Activated CD4-positive, alpha-beta T cell treated with anti-CD3 and anti-CD28 coated beads for 36 hours (primary cell): ENCODE measurements at regions of chr17 and their contacts with region 1.

Region 1: GRCh38 chr17:2814481-2815341 is 18.5 kb downstream of the RAP1GAP2 start:
- DNase-seq: peak; percentile 92
- ATAC-seq: peak; percentile 80
- H3K4me3 Mint-ChIP-seq: peak overlapping the region; percentile 38
- H3K27ac Mint-ChIP-seq: no peak overlapping the region
- H3K4me1 Mint-ChIP-seq: peaks cover 20% of the 10 kb centered on the region
- H3K27me3 Mint-ChIP-seq: peaks cover 10% of the 10 kb centered on the region

Region 2: GRCh38 chr17:2796164-2797125 is 18.3 kb before region 1 on chr17 and contains the start of gene RAP1GAP2:
- CTCF ChIA-PET with region 1: interaction called, 4 read pairs
- POLR2A ChIA-PET with region 1: interaction called, 6 read pairs
- intact Hi-C with region 1: loop called in 1 of 2 experiments (anchors 1 kb)
- DNase-seq: peak; percentile 72
- ATAC-seq: peak; percentile 79
- H3K4me3 Mint-ChIP-seq: peak within 1 kb of the TSS; percentile 50
- H3K27ac Mint-ChIP-seq: peak within 1 kb of the TSS; percentile 12
- H3K4me1 Mint-ChIP-seq: peaks cover 70% of the 10 kb centered on the region
- H3K27me3 Mint-ChIP-seq: peaks cover 16% of the 10 kb centered on the region
- total RNA-seq, gene RAP1GAP2: 0.64 to 0.86 TPM

Region 3: DNA sequence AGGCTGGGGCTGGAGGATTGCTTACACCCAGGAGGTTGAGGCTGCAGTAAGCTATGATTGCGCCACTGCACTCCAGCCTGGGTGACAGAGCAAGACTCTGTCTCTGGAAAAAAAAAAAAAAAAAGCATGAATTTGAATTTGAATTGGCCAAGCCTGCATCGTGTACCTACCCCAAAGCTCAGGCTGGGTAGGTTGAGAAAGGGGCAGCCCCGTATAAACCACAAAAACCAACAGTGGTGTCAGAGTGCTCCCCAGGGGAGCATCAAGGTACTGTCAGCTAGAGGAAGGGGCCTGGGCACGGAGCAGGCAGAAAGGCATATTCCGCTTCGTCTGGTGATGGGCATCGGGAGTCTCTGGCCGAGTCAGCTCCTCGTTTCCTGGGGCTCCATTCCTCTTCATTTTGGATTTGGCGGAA is 22.4 kb after region 1 on chr17:
- CTCF ChIA-PET with region 1: interaction called, 6 read pairs
- POLR2A ChIA-PET with region 1: no interaction called
- intact Hi-C with region 1: loop called in 1 of 2 experiments (anchors 1 kb)
- DNase-seq: peak; percentile 79
- ATAC-seq: peak; percentile 100
- H3K4me3 Mint-ChIP-seq: no peak overlapping the region
- H3K27ac Mint-ChIP-seq: no peak overlapping the region
- H3K4me1 Mint-ChIP-seq: peaks cover 8% of the 10 kb centered on the region
- H3K27me3 Mint-ChIP-seq: no peaks in the 10 kb centered on the region

Region 4: DNA sequence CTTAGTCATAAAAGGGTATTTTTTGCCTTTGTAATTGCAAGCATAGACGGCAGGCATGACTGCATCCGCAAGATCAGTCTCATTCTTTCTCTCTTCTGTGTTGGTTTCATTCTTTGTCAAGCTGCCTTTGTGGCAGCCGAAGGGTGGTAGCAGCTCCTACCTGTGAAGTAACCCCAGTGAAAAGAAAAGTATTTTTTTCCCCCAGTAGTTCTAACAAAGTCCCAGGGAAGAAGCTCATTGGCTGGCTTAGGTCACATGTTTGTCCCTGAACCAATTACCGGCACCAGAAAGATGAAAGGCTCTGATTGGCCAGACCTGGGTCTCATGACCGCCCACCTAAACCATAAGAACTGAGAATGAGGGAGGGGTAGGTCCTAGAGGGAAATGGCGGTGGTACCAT is 92.2 kb after region 1 on chr17:
- CTCF ChIA-PET with region 1: no interaction called
- POLR2A ChIA-PET with region 1: no interaction called
- intact Hi-C with region 1: loop called in 1 of 2 experiments (anchors 1 kb)
- DNase-seq: peak; percentile 76
- ATAC-seq: peak; percentile 99
- H3K4me3 Mint-ChIP-seq: no peak overlapping the region
- H3K27ac Mint-ChIP-seq: peak overlapping the region; percentile 72
- H3K4me1 Mint-ChIP-seq: peaks cover 20% of the 10 kb centered on the region
- H3K27me3 Mint-ChIP-seq: no peaks in the 10 kb centered on the region

Region 5: DNA sequence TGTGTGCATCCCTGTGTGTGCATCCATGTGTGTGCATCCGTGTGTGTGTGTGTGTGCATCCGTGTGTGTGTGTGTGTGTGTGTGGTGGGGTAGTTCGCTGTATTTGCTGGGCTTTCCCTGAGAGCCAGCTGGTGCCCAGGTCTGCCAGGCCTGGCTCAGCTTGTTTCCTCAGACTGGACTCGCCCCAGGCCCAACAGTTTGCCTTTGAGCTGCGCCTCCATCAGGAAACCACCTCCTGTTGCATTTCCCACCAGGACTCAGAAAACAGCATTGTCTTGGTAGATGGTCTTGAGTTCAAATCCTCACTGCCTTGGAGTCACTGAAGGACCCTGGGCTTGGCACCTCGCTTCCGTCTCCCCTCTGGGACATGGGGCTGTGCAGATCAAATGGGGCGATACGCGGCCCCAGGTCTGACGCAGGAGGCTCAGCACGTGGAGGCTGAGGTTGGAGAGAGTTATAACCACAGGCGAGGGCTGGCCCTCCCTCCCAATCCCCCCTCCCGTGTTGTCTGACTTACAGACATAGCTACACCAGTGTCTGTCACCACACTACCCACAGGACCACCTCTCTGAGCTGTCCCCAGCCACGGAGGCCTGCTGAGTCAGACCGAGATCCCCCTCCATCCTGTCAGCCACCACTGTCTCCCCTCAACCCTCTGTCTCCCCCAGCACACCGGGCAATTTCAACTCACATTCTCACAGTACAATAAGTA is 981.6 kb after region 1 on chr17:
- CTCF ChIA-PET with region 1: no interaction called
- POLR2A ChIA-PET with region 1: no interaction called
- intact Hi-C with region 1: loop called in 1 of 2 experiments (anchors 10 kb)
- DNase-seq: peak; percentile 80
- ATAC-seq: peak; percentile 75
- H3K4me3 Mint-ChIP-seq: no peak overlapping the region
- H3K27ac Mint-ChIP-seq: peak overlapping the region; percentile 43
- H3K4me1 Mint-ChIP-seq: peaks cover 29% of the 10 kb centered on the region
- H3K27me3 Mint-ChIP-seq: no peaks in the 10 kb centered on the region